Naive thymus-derived CD4-positive, alpha-beta T cell (primary cell): ENCODE measurements at regions of chr7 and their contacts with region 1.

Region 1: GRCh38 chr7:99408379-99409191 is at the starts of genes BUD31 and PDAP1:
- DNase-seq: peak; percentile 92 to 100 (median 98)
- ATAC-seq: peak; percentile 96
- H3K4me3 ChIP-seq: peak within 1 kb of the TSS; percentile 89
- H3K4me3 Mint-ChIP-seq: peak within 1 kb of the TSS; percentile 91 to 98 (median 96)
- H3K27ac ChIP-seq: peak within 1 kb of the TSS; percentile 93
- H3K27ac Mint-ChIP-seq: peak within 1 kb of the TSS; percentile 94 to 98 (median 97)
- H3K4me1 ChIP-seq: peaks cover 26 to 37% of the 10 kb centered on the region in 2 donors
- H3K4me1 Mint-ChIP-seq: peaks cover 37 to 67% (median 50%) of the 10 kb centered on the region in 7 donors
- H3K27me3 ChIP-seq: no peaks in the 10 kb centered on the region
- H3K27me3 Mint-ChIP-seq: no peaks in the 10 kb centered on the region
- total RNA-seq, gene BUD31: 55.2 to 134 (median 83.9) TPM
- total RNA-seq, gene PDAP1: 42.8 to 104 (median 64.0) TPM

Region 2: GRCh38 chr7:99364961-99365817 is 43.4 kb before region 1 on chr7:
- CTCF ChIA-PET with region 1: interaction called, 11 read pairs
- POLR2A ChIA-PET with region 1: interaction called, 6 read pairs
- intact Hi-C with region 1: loop called (anchors 1 to 5 kb)
- DNase-seq: peak; percentile 49 to 77 (median 64)
- ATAC-seq: peak; percentile 97
- H3K4me3 ChIP-seq: no peak overlapping the region
- H3K4me3 Mint-ChIP-seq: no peak overlapping the region
- H3K27ac ChIP-seq: no peak overlapping the region
- H3K27ac Mint-ChIP-seq: peak overlapping the region in 4 of 9 donors; percentile 19 to 81 (median 22)
- H3K4me1 ChIP-seq: no peaks in the 10 kb centered on the region
- H3K4me1 Mint-ChIP-seq: peaks cover 0 to 10% (median 0%) of the 10 kb centered on the region in 7 donors
- H3K27me3 ChIP-seq: no peaks in the 10 kb centered on the region
- H3K27me3 Mint-ChIP-seq: no peaks in the 10 kb centered on the region

Region 3: DNA sequence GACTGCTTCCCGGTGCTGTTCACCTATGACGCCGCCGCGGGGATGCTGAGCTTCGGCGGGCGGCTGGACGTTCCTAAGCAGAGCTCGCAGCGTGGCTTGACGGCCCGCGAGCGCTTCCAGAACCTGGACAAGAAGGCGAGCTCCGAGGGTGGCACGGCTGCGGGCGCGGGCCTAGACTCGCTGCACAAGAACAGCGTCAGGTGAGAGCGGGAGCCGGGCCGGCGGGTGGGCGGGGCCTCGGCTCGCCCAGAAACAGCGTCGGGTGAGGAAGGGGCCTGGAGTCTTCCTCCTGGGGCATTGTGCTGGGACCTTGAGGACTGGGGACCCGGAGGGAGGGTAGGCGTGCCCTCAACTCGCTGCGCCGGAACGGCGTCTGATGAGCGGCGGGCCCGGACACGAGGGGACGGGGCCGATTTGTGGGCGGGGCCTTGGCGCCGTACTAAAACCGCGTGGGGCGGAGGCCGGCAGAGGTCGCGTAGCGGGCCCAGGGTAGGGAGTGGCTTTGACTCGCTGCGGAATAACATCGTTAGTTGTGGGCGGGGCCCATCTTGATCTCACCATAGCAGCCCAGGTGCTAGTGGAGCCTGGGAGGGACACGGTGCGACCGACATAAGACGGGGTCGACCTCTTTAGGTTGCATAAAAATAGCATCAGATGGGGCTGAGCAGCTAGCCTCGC is 15.8 kb before region 1 on chr7:
- CTCF ChIA-PET with region 1: interaction called, 4 read pairs
- POLR2A ChIA-PET with region 1: interaction called, 55 read pairs
- intact Hi-C with region 1: loop called (anchors 1 kb)
- DNase-seq: peak; percentile 72 to 87 (median 83)
- ATAC-seq: peak; percentile 98
- H3K4me3 ChIP-seq: peak overlapping the region; percentile 55
- H3K4me3 Mint-ChIP-seq: peak overlapping the region; percentile 74 to 91 (median 84)
- H3K27ac ChIP-seq: peak overlapping the region; percentile 85
- H3K27ac Mint-ChIP-seq: peak overlapping the region; percentile 85 to 97 (median 95)
- H3K4me1 ChIP-seq: peaks cover 4 to 9% of the 10 kb centered on the region in 2 donors
- H3K4me1 Mint-ChIP-seq: peaks cover 10 to 28% (median 17%) of the 10 kb centered on the region in 7 donors
- H3K27me3 ChIP-seq: no peaks in the 10 kb centered on the region
- H3K27me3 Mint-ChIP-seq: no peaks in the 10 kb centered on the region

Region 4: GRCh38 chr7:99472561-99473243 is 64.1 kb after region 1 on chr7 and contains the start of gene ZNF789:
- CTCF ChIA-PET with region 1: interaction called, 3 read pairs
- POLR2A ChIA-PET with region 1: interaction called, 4 read pairs
- intact Hi-C with region 1: loop called (anchors 1 kb)
- DNase-seq: peak; percentile 90 to 98 (median 95)
- ATAC-seq: peak; percentile 99
- H3K4me3 ChIP-seq: peak within 1 kb of the TSS; percentile 86
- H3K4me3 Mint-ChIP-seq: peak within 1 kb of the TSS; percentile 94 to 99 (median 98)
- H3K27ac ChIP-seq: peak within 1 kb of the TSS; percentile 82
- H3K27ac Mint-ChIP-seq: peak within 1 kb of the TSS; percentile 87 to 98 (median 95)
- H3K4me1 ChIP-seq: peaks cover 8 to 15% of the 10 kb centered on the region in 2 donors
- H3K4me1 Mint-ChIP-seq: peaks cover 23 to 48% (median 35%) of the 10 kb centered on the region in 7 donors
- H3K27me3 ChIP-seq: no peaks in the 10 kb centered on the region
- H3K27me3 Mint-ChIP-seq: peaks cover 0 to 5% (median 0%) of the 10 kb centered on the region in 5 donors
- total RNA-seq, gene ZNF789: 17.4 to 28.0 (median 27.3) TPM

Region 5: GRCh38 chr7:99558306-99559174 is 150.0 kb after region 1 on chr7 and contains the start of gene ZNF655:
- CTCF ChIA-PET with region 1: no interaction called
- POLR2A ChIA-PET with region 1: interaction called, 15 read pairs
- intact Hi-C with region 1: loop called in 1 of 2 experiments (anchors 2 kb)
- DNase-seq: peak; percentile 85 to 96 (median 93)
- ATAC-seq: peak; percentile 89
- H3K4me3 ChIP-seq: peak within 1 kb of the TSS; percentile 85
- H3K4me3 Mint-ChIP-seq: peak within 1 kb of the TSS; percentile 94 to 100 (median 97)
- H3K27ac ChIP-seq: peak within 1 kb of the TSS; percentile 99
- H3K27ac Mint-ChIP-seq: peak within 1 kb of the TSS; percentile 95 to 100 (median 99)
- H3K4me1 ChIP-seq: peaks cover 24 to 25% of the 10 kb centered on the region in 2 donors
- H3K4me1 Mint-ChIP-seq: peaks cover 32 to 69% (median 51%) of the 10 kb centered on the region in 7 donors
- H3K27me3 ChIP-seq: no peaks in the 10 kb centered on the region
- H3K27me3 Mint-ChIP-seq: no peaks in the 10 kb centered on the region
- total RNA-seq, gene ZNF655: 110 to 165 (median 157) TPM

Region 6: DNA sequence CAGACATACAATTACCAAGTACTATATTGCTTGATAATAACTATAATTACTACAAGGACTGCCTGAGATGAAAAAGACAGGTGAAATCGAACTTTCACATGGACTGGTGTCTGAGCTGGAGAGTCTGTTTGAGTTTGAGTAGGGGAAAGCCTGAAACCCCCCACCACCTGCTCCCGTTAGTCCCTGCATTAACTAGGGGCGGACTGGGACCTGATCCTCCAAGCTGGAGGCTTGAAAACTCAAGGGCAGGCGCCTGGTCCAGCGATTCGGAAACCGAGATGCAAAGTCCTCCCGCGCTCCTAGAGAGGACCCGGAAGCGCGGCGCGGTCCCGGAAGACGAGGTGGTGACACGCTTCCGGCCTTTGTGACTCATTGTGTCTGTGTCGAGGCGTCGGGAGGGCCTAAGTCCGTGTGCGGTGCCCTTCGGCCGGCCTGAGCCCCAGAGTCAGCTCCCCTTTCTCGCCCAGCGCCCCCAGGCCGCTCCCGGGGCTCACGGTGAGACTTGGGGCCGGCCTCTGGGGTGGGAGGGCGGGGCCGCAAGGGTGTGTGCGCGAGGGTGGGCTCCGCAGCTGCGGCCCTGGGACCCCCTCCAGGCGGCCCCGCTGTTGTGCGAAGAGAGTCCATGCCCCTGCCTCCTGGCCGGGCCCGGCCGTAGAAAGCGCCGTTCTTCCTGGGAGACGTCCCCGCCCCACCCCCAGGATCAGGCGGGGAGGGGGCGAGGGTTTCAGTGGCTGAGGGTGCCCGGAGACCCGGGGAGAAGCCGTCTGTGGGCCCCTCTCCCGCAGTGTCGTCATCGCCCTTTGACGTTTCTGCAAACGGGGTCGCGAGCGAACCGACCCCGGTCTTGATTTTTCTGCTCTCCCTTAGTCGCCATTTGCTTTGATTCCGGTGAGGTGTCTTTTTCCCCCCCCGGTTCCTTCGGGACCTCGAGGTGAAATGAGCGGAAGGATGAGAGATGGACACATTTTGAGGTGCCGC is 606.9 kb after region 1 on chr7 and contains the start of gene ZKSCAN1:
- CTCF ChIA-PET with region 1: no interaction called
- POLR2A ChIA-PET with region 1: no interaction called
- intact Hi-C with region 1: loop called in 1 of 2 experiments (anchors 2 kb)
- DNase-seq: peak; percentile 68 to 86 (median 81)
- ATAC-seq: peak; percentile 99
- H3K4me3 ChIP-seq: peak within 1 kb of the TSS; percentile 51
- H3K4me3 Mint-ChIP-seq: peak within 1 kb of the TSS; percentile 92 to 98 (median 96)
- H3K27ac ChIP-seq: peak within 1 kb of the TSS; percentile 98
- H3K27ac Mint-ChIP-seq: peak within 1 kb of the TSS; percentile 91 to 98 (median 97)
- H3K4me1 ChIP-seq: peaks cover 19 to 22% of the 10 kb centered on the region in 2 donors
- H3K4me1 Mint-ChIP-seq: peaks cover 23 to 57% (median 44%) of the 10 kb centered on the region in 7 donors
- H3K27me3 ChIP-seq: no peaks in the 10 kb centered on the region
- H3K27me3 Mint-ChIP-seq: peaks cover 0 to 3% (median 0%) of the 10 kb centered on the region in 5 donors
- total RNA-seq, gene ZKSCAN1: 54.0 to 103 (median 70.1) TPM